Mammary epithelial cell (primary cell): ENCODE measurements at regions of chr5 and their contacts with region 1.

Region 1: GRCh38 chr5:96702503-96703383 is 40.6 kb downstream of the CAST start:
- DNase-seq: peak; percentile 97
- H3K4me3 ChIP-seq: peak overlapping the region; percentile 63 to 79 (median 68)
- H3K27ac ChIP-seq: peak overlapping the region; percentile 99
- H3K4me1 ChIP-seq: peaks cover 54% of the 10 kb centered on the region
- H3K27me3 ChIP-seq: no peaks in the 10 kb centered on the region
- CTCF ChIP-seq: no peak

Region 2: GRCh38 chr5:96601811-96602244 is 100.9 kb before region 1 on chr5:
- CTCF ChIA-PET with region 1: no interaction called
- dilution Hi-C with region 1: no loop called
- in situ Hi-C with region 1: no loop called
- intact Hi-C with region 1: no loop called
- DNase-seq: peak; percentile 55
- H3K4me3 ChIP-seq: no peak overlapping the region
- H3K27ac ChIP-seq: no peak overlapping the region
- H3K4me1 ChIP-seq: no peaks in the 10 kb centered on the region
- H3K27me3 ChIP-seq: peaks cover 5% of the 10 kb centered on the region
- CTCF ChIP-seq: peak; percentile 77 to 87

Region 3: GRCh38 chr5:96734871-96735325 is 32.2 kb after region 1 on chr5:
- CTCF ChIA-PET with region 1: no interaction called
- dilution Hi-C with region 1: no loop called
- in situ Hi-C with region 1: no loop called
- intact Hi-C with region 1: loop called (anchors 1 kb)
- DNase-seq: peak; percentile 71
- H3K4me3 ChIP-seq: no peak overlapping the region
- H3K27ac ChIP-seq: peak overlapping the region; percentile 70
- H3K4me1 ChIP-seq: peaks cover 39% of the 10 kb centered on the region
- H3K27me3 ChIP-seq: no peaks in the 10 kb centered on the region
- CTCF ChIP-seq: peak in 1 of 2 donors; percentile 9

Region 4: DNA sequence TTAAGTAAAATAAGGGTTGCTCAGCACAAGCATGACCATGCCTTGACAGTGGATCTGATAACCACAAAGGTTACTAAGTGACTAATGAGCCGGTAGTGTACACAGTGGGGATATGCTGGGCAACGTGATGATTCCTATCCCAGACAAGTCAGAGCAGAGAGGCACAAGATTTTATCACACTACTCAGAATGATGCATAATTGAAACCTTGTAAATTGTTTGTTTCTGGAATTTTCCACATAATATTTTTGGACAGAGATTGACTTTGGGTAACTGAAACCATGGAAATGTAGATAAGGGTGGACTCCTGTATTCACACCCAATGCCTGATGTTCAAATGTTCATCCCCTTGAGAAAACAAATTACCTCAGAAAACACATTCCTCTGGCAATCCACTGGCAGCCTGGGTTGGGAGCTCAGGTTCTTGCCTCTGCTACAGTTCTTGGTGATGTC is 121.2 kb after region 1 on chr5:
- CTCF ChIA-PET with region 1: no interaction called
- dilution Hi-C with region 1: no loop called
- in situ Hi-C with region 1: no loop called
- intact Hi-C with region 1: no loop called
- DNase-seq: peak; percentile 99
- H3K4me3 ChIP-seq: no peak overlapping the region
- H3K27ac ChIP-seq: peak overlapping the region; percentile 89
- H3K4me1 ChIP-seq: peaks cover 32% of the 10 kb centered on the region
- H3K27me3 ChIP-seq: no peaks in the 10 kb centered on the region
- CTCF ChIP-seq: no peak